Right ventricle myocardium inferior (tissue), 1 donor: ENCODE measurements at regions of chr14 and their contacts with region 1.

Region 1: DNA sequence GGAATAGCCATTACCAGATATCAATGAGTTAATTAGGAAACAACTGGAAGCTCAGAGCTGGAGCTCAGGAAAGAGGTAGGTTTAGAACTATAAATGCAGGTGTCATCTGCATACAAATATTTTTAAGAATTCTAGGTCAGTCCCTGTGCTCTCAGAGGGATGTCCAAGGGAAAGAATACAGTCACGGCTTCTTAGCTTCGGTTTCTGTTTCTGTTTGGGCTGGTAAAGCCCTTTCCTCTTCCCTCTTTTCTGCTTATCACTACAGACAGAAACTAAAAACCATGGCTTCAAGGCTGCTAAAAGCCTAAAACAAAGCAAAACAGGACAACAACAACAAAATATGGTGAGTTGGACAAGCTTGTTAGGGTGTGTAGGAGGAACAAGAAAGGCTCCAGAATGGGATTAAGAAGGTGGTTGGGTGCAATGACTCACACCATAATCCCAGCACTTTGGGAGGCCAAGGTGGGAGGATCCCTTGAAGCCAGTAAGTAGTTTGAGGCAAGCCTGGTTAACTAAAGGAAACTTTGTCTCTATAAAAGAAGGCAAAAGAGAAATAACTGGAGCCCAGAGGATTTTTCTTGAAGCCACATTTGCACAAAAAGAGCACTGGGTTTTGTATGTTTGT is 113.0 kb downstream of the SEC23A start:
- DNase-seq: no peak
- ATAC-seq: no peak

Region 2: GRCh38 chr14:38877744-38878388 is 112.2 kb before region 1 on chr14:
- intact Hi-C with region 1: loop called (anchors 5 kb)
- DNase-seq: no peak
- ATAC-seq: no peak

Region 3: GRCh38 chr14:39474416-39474911 is 484.4 kb after region 1 on chr14:
- intact Hi-C with region 1: no loop called
- DNase-seq: no peak
- ATAC-seq: no peak